Activated naive CD4-positive, alpha-beta T cell treated with anti-CD3 and anti-CD28 coated beads for 36 hours (primary cell): ENCODE measurements at regions of chr10 and their contacts with region 1.

Region 1: GRCh38 chr10:28241741-28242399 is 61.0 kb downstream of the MPP7 start:
- DNase-seq: peak; percentile 63
- H3K4me3 Mint-ChIP-seq: no peak overlapping the region
- H3K27ac Mint-ChIP-seq: no peak overlapping the region
- H3K4me1 Mint-ChIP-seq: peaks cover 36% of the 10 kb centered on the region
- H3K27me3 Mint-ChIP-seq: no peaks in the 10 kb centered on the region

Region 2: DNA sequence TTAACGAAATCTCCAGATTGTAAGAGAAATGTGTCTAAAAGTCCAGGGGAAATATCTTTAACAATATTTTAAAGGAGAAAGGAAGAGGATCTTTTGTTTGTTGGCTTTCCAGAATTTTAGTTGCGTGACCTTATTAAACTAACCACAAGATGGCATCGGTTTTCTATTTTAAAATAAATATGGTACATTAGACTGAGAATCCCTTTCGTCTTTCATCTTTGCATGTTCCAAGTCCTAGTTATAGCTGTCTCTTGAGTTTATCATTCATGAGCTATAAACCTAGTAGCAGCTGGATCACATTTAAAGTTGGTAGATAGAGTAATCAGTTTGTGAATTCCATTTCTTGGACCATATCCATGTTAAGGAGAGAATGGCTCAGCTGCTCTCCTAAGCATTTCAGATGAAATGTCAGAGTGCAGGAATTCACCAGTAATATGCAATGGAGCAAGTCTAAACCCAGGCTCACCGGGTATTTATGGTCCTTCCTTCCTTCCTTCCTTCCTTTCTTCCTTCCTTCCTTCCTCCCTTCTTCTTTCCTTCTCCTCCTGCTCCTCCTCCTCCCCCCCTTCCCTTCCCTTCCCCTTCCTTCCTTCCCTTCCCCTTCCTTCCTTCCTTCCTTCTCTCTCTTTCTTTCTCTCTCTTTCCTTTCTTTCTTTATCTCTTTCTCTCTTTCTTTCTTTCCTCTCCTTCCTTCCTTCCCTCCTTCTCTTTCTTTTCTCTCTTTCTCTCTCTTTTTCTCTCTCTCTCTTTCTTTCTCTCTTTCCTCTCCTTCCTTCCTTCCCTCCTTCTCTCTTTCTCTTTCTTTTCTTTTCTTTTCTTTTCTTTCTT is 795.6 kb before region 1 on chr10:
- CTCF ChIA-PET with region 1: interaction called, 4 read pairs
- intact Hi-C with region 1: loop called (anchors 2 kb)
- DNase-seq: no peak
- H3K4me3 Mint-ChIP-seq: no peak overlapping the region
- H3K27ac Mint-ChIP-seq: no peak overlapping the region
- H3K4me1 Mint-ChIP-seq: peaks cover 7% of the 10 kb centered on the region
- H3K27me3 Mint-ChIP-seq: no peaks in the 10 kb centered on the region

Region 3: DNA sequence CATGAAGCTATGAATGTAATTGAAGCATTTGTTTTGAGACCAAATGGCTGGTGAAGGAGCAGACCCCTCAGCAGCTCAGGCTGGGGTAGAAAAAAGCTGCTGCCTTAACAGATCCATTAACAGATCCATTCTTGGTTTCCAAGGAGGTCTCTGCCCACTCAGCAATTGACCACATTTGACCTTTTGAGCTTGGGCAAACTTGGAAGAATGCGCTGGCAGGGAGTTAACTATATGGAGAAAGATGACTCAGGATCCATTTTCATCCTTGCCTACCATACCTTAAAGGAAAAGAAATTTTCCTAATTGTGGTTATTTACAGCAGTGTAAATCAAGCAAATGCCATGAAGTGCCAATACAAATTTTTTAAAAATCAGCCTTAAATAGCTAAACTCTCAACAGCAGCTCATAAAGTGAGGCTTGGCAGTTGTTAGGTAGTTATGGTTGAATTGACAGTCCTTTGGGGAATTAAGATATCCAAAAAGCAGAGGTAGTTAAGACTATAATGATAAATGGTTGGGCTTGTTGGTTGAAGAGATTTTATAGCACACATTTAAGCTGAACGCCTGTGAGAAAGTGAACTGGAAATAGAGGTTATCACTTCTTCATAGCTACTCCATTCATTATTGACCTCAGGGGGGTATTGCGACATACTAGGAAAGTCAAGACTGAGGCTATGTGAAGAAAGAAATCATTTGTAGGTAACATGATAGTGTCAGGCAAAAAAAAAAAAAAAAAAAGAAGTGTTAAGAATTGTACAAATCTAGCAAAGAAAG is 580.2 kb before region 1 on chr10:
- CTCF ChIA-PET with region 1: interaction called, 4 read pairs
- intact Hi-C with region 1: loop called (anchors 5 kb)
- DNase-seq: no peak
- H3K4me3 Mint-ChIP-seq: no peak overlapping the region
- H3K27ac Mint-ChIP-seq: no peak overlapping the region
- H3K4me1 Mint-ChIP-seq: no peaks in the 10 kb centered on the region
- H3K27me3 Mint-ChIP-seq: peaks cover 18% of the 10 kb centered on the region

Region 4: GRCh38 chr10:27783660-27784059 is 458.2 kb before region 1 on chr10:
- CTCF ChIA-PET with region 1: interaction called, 11 read pairs
- intact Hi-C with region 1: loop called (anchors 1 kb)
- DNase-seq: peak; percentile 57
- H3K4me3 Mint-ChIP-seq: no peak overlapping the region
- H3K27ac Mint-ChIP-seq: no peak overlapping the region
- H3K4me1 Mint-ChIP-seq: no peaks in the 10 kb centered on the region
- H3K27me3 Mint-ChIP-seq: peaks cover 8% of the 10 kb centered on the region

Region 5: DNA sequence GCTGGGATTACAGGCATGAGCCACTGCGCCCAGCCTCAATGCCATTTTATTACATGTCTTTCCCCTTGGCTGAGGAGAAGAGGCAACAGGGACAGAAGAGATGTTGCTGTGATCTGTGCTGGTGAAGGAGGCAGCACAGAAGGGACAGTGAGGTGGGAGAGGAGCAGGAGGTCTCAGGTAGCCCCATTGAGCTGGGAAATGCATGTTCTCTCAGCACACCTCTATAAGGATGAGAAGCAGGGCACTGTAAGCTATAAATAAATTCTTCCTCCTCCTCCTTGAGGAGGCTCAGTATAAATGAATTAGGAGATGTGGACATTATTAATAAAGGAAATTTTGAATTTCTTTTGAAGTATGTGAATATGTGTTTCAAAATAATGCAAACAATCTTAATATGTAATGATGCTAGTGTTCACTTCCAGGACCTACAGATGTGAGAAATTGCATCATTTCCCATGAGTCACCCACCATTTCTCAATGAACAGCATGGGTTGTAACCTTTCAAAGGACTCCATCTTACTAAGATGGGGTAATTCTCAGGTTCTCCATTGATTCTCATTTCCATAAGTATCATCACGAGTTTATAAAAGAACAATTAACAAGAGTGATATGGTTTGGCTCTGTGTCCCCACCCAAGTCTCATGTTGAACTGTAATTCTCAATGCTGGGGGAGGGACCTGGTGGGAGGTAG is 154.1 kb before region 1 on chr10:
- CTCF ChIA-PET with region 1: no interaction called
- intact Hi-C with region 1: loop called (anchors 5 kb)
- DNase-seq: peak; percentile 51
- H3K4me3 Mint-ChIP-seq: no peak overlapping the region
- H3K27ac Mint-ChIP-seq: peak overlapping the region; percentile 85
- H3K4me1 Mint-ChIP-seq: peaks cover 16% of the 10 kb centered on the region
- H3K27me3 Mint-ChIP-seq: no peaks in the 10 kb centered on the region

Region 6: DNA sequence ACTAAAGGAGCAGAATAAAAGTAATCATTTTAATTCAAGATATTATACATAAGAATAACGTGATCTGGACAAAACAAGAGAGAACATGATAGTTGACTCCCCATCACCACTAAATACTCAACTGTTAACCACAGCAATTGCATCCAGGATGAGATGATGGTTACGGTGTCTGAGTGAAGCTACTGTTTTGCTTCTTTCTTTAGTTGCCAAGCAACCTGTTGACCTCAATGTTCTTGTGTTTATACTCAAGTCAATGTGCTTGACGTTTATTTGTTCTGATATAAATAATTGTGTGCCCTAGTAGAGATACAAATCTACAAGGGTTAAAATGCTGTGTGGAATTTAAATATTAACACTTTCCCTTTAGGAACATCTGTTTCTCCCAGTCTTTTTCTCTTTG is 92.4 kb after region 1 on chr10:
- CTCF ChIA-PET with region 1: interaction called, 3 read pairs
- intact Hi-C with region 1: loop called (anchors 1 kb)
- DNase-seq: peak; percentile 61
- H3K4me3 Mint-ChIP-seq: peak overlapping the region; percentile 67
- H3K27ac Mint-ChIP-seq: peak overlapping the region; percentile 96
- H3K4me1 Mint-ChIP-seq: peaks cover 76% of the 10 kb centered on the region
- H3K27me3 Mint-ChIP-seq: no peaks in the 10 kb centered on the region

Region 7: DNA sequence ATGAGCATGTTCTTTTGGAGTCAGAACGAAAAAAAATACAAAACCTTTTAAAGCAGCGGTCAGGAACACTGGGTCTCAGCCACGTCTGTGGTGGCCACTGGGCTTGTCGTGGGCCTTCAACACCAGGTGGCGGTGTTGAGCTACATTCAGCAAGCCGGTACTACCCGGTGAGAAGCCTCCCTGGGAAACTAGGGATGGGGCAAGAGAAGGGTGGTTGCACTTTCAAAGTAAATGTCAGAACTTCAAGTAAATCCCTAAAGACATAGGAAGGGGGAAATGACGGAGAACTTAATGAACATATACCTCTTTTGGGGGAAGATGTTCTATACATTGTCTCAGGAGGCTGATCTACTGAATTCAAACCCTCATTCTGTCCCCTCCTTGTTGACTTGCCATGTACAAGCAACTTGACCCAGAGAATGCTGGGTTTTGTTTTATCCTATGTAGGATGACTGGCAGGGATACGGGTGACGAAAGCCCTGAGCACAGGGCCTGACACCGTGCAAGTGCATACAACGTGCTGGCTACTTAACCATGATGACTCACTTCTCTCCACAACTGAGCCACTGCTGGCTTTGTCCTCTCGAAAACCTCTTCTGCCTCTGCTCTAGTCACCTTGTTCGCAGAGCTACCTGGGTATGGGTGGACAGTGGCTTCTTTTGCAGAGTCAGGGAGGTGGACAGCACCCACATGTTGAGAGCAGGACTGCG is 386.5 kb after region 1 on chr10:
- CTCF ChIA-PET with region 1: no interaction called
- intact Hi-C with region 1: no loop called
- DNase-seq: peak; percentile 83
- H3K4me3 Mint-ChIP-seq: no peak overlapping the region
- H3K27ac Mint-ChIP-seq: no peak overlapping the region
- H3K4me1 Mint-ChIP-seq: peaks cover 4% of the 10 kb centered on the region
- H3K27me3 Mint-ChIP-seq: peaks cover 10% of the 10 kb centered on the region

Region 8: DNA sequence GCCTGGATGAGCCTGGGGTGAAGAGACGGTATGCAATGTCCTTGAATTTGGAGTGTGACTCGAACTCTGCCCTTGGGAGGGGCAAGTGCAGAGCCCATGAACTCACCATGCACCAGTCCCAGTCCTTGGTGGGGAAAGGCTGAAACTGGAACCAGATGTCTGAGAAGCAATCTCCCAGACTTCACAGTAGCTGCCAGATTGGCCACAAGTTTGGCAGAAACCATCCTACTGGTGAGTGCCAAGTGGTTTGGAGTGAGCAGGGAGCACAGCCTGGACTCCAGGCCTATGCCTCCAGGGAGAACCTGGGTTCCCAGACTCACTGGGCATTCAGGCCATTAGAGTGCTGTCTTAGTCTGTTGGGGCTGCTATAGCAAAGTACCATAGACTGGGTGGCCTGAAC is 947.4 kb after region 1 on chr10:
- CTCF ChIA-PET with region 1: no interaction called
- intact Hi-C with region 1: no loop called
- DNase-seq: no peak
- H3K4me3 Mint-ChIP-seq: no peak overlapping the region
- H3K27ac Mint-ChIP-seq: no peak overlapping the region
- H3K4me1 Mint-ChIP-seq: no peaks in the 10 kb centered on the region
- H3K27me3 Mint-ChIP-seq: peaks cover 11% of the 10 kb centered on the region